ENCODE measurements at regions of chr1 and their contacts with region 1.

Region 1: GRCh38 chr1:36463803-36464604 is at the start of gene MRPS15:
- DNase-seq: peak; percentile 97
- H3K4me3 Mint-ChIP-seq: peak within 1 kb of the TSS; percentile 99
- H3K27ac Mint-ChIP-seq: peak within 1 kb of the TSS; percentile 93
- H3K4me1 Mint-ChIP-seq: peaks cover 62% of the 10 kb centered on the region
- H3K27me3 Mint-ChIP-seq: no peaks in the 10 kb centered on the region
- total RNA-seq, gene MRPS15: 92.3 to 99.9 TPM

Region 2: DNA sequence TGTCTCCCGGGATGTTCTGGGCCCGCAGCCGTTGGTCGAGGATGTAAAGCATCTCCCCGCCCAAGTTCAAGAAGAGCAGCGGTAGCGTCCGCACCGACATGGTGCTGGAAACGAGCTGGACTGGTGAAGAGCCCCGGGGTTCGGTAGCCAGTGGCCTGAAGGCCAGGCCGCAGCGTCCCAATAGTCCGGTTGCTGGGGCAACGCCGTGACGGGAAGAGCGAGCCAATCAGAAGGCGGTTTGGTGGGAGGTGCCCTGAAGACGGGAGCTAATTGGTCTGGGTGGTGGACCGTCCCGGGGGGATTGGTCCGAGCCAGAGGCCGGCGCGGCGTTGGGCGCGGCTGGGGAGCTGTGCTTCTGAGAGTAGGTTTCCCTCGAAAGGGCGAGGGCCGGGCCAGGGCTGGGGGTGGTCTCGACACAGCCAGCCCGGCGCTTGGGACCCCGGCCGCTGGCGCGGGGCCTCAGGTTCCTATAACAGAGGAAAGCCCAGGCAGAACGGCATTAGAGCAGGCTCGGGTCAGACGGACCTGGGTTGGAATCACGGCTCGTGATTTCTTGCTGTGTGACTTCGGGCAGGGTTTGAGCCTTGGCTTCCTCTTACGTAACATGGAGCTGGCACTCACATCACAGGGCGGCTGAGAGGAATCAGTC is 13.6 kb before region 1 on chr1 and contains the start of gene OSCP1:
- CTCF ChIA-PET with region 1: interaction called, 4 read pairs
- POLR2A ChIA-PET with region 1: interaction called, 32 read pairs
- DNase-seq: peak; percentile 90
- H3K4me3 Mint-ChIP-seq: peak within 1 kb of the TSS; percentile 82
- H3K27ac Mint-ChIP-seq: peak within 1 kb of the TSS; percentile 86
- H3K4me1 Mint-ChIP-seq: peaks cover 31% of the 10 kb centered on the region
- H3K27me3 Mint-ChIP-seq: no peaks in the 10 kb centered on the region
- total RNA-seq, gene OSCP1: 1.3 to 1.7 TPM

Measured in activated CD4-positive, alpha-beta memory T cell treated with anti-CD3 and anti-CD28 coated beads, Interleukin-2, amount 10 ng/mL, durations not matched to agents 7 days and 5 days (primary cell).